ENCODE measurements at regions of chr3 and their contacts with region 1.

Region 1: GRCh38 chr3:101819758-101820157 is 29.6 kb upstream of the NFKBIZ start:
- DNase-seq: no peak
- ATAC-seq: peak; percentile 79
- H3K4me3 ChIP-seq: no peak overlapping the region
- H3K4me3 Mint-ChIP-seq: no peak overlapping the region
- H3K27ac ChIP-seq: no peak overlapping the region
- H3K27ac Mint-ChIP-seq: peak overlapping the region in 3 of 9 donors; percentile 28 to 75 (median 31)
- H3K4me1 ChIP-seq: peaks cover 0 to 1% of the 10 kb centered on the region in 2 donors
- H3K4me1 Mint-ChIP-seq: peaks cover 16 to 50% (median 35%) of the 10 kb centered on the region in 7 donors
- H3K27me3 ChIP-seq: no peaks in the 10 kb centered on the region
- H3K27me3 Mint-ChIP-seq: no peaks in the 10 kb centered on the region

Region 2: GRCh38 chr3:102374863-102375634 is 555.3 kb after region 1 on chr3:
- CTCF ChIA-PET with region 1: no interaction called
- POLR2A ChIA-PET with region 1: no interaction called
- intact Hi-C with region 1: loop called in 1 of 2 experiments (anchors 5 kb)
- DNase-seq: peak in 2 of 9 donors; percentile 1 to 6
- ATAC-seq: no peak
- H3K4me3 ChIP-seq: no peak overlapping the region
- H3K4me3 Mint-ChIP-seq: no peak overlapping the region
- H3K27ac ChIP-seq: no peak overlapping the region
- H3K27ac Mint-ChIP-seq: peak overlapping the region in 1 of 9 donors; percentile 35
- H3K4me1 ChIP-seq: no peaks in the 10 kb centered on the region
- H3K4me1 Mint-ChIP-seq: no peaks in the 10 kb centered on the region
- H3K27me3 ChIP-seq: no peaks in the 10 kb centered on the region
- H3K27me3 Mint-ChIP-seq: peaks cover 3 to 25% (median 21%) of the 10 kb centered on the region in 5 donors